PC-3 (cell line): ENCODE measurements at regions of chr10 and their contacts with region 1.

Region 1: DNA sequence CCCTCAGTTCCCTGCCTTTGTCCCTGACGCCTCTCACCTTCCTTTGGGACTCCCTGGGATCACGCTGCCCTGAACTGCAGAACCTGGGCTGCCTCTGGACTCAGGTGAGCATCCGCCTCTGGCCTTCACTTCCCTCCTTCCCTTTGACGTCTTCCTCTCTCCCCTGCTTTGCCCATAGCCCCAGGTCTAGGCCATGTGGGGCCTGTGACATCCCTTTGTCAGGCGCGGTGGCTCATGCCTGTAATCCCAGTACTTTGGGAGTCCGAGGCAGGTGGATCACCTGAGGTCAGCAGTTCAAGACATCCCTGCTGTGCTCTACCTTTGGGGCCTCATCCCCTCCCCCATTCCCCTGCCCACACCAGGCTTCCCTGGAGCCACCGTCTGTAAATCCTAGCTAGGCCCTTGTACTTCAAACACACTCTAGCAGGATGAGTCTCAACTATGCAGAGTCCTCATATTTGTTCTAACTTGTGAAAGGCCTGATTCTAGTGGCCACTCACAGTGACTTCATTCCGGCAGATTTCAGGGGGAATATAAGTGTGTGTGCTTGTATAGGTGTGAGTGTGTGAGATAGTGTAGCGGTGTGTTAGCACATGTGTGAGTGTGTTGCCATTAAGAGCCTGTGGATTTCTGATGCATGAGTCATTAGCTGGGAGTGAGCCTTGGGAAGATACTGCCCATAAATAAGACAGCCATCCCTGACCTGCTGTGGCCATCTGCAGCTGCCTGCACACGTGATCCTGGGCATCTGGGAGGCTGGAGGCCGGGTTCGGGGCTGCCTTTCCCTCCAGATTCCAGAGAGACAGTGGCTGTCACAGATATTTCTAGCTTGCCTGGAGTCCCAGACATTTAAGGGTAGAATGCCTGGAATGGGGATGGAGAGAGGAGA is 1.8 kb upstream of the NEURL1 start:
- DNase-seq: peak; percentile 71
- ATAC-seq: peak; percentile 84
- H3K4me3 ChIP-seq: no peak overlapping the region
- H3K27ac ChIP-seq: no peak overlapping the region
- H3K4me1 ChIP-seq: peaks cover 9% of the 10 kb centered on the region
- H3K27me3 ChIP-seq: peaks cover 21% of the 10 kb centered on the region
- CTCF ChIP-seq: no peak

Region 2: DNA sequence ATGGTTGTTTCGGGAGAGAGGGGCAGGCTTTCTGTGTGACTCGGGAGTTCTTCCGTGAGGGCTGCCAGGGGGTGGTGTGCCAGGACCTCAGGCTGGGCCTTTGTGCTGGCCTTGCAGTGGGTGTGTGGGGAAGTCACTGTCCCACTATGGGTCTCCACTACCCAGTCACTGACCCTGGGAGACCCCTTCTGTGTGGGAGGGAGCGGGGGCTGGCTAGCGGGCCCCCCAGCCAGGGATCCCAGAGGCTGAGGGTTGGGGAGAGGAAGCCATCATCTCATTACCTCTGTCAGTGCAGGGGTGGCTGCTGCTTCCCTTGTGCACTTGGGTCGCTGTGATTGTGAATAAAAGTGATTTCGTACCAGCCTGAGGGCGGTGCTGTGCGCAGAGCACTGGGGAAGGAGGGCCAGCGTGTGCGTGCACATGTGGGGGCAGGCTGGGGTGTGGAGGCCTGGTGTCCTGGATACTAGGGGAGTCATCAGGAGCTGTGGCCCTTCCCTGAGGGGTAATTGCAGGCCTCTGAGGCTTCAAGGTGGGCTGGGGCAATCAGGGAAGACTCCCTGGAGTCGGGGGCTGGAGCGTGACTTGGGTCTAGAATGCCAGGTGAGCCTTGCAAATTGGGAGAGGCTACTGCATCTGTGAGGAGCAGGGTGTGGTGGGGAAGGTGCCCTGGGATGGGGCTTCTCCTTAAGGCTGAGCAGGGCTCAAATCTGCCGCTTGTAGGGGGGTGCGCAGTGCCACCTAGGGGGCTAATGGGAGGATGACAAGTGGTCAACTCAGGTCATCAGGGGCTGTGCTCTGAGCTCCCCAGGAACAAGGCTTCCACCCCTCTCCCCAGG is 100.7 kb after region 1 on chr10:
- CTCF ChIA-PET with region 1: no interaction called
- POLR2A ChIA-PET with region 1: no interaction called
- intact Hi-C with region 1: loop called (anchors 5 kb)
- DNase-seq: peak; percentile 51
- ATAC-seq: peak; percentile 86
- H3K4me3 ChIP-seq: no peak overlapping the region
- H3K27ac ChIP-seq: no peak overlapping the region
- H3K4me1 ChIP-seq: no peaks in the 10 kb centered on the region
- H3K27me3 ChIP-seq: no peaks in the 10 kb centered on the region
- CTCF ChIP-seq: peak; percentile 69